Sigmoid colon (tissue), 7 donors: ENCODE measurements at regions of chr20 and their contacts with region 1.

Region 1: DNA sequence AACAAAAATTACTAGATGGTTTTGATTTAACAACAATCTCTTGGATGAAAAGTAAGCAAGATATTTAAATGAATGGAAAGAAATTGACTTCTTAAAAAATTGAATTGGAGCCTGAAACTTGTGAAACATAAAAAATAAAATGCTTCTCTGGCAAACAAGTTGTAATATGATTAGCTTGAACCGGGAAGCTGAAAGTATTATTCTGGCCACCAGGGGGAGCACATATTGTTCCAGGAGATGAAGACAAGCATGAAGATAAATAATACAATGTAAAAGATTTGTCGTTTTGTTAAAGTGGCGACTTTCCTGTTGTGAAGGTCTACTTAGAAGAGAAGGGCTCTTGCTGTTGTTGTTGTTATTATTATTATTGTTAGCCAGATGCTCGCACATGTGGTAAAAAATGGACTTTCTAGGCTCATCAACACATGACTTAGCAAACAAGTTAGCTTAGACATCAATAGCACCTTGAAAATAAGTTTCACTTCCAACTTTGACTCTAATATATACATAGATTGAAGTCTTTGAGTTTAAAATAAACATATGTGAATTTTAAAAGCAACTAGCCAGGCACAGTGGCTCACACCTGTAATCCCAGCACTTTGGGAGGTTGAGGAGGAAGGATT is 14.2 kb downstream of the PAX1 start:
- DNase-seq: peak; percentile 82
- H3K4me3 ChIP-seq: no peak overlapping the region
- H3K27ac ChIP-seq: no peak overlapping the region
- H3K4me1 ChIP-seq: peaks cover 0 to 2% (median 0%) of the 10 kb centered on the region in 4 donors
- H3K27me3 ChIP-seq: peaks cover 14 to 40% (median 30%) of the 10 kb centered on the region in 3 donors
- CTCF ChIP-seq: peak; percentile 41 to 79 (median 60)
- EP300 ChIP-seq: no peak
- POLR2A ChIP-seq: no peak

Region 2: DNA sequence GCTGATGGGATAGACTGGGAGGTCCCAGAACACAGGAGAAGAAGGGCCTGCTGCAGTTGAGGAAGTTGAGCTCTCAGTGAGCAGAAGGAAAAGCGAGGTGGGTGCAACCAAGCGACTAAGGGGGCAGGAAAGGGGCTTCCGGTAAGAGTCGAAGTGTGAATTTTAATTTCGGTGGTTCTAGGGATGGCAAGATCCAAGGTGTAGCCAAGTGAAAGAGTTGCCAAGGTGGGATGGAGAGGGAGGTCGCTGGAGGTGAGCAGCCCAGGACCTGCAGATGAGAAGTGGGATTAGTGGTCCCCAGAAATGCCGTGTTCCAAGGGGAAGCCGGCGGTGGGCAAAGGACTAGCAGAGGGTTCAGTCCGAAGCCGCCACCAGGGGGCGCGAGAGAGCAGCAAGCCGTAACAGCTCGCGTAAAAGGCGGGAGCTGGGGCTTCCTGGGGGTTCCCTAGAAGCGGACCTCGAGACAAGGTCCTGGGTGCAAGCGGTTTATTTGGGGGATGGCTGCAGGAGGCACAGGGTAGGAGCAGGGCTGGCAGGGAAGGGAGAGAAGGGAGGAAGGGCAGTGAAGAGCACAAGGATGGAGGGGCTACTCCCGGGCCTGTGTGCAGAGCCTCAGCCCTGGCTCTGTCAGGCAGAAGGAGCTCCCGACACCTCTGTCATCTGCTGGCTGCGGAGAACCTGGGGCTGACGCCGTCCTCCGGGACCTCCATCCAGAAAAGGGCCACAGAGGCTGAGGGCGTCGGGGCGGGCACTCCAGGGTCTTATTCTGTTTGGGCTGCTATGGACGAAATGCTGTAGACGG is 89.4 kb after region 1 on chr20:
- intact Hi-C with region 1: loop called (anchors 5 kb)
- DNase-seq: no peak
- H3K4me3 ChIP-seq: no peak overlapping the region
- H3K27ac ChIP-seq: no peak overlapping the region
- H3K4me1 ChIP-seq: peaks cover 0 to 20% (median 8%) of the 10 kb centered on the region in 4 donors
- H3K27me3 ChIP-seq: peaks cover 0 to 14% (median 0%) of the 10 kb centered on the region in 3 donors
- CTCF ChIP-seq: peak; percentile 32 to 71 (median 54)
- EP300 ChIP-seq: no peak
- POLR2A ChIP-seq: no peak

Region 3: GRCh38 chr20:22312744-22313346 is 593.1 kb after region 1 on chr20:
- intact Hi-C with region 1: loop called (anchors 5 kb)
- DNase-seq: no peak
- H3K4me3 ChIP-seq: no peak overlapping the region
- H3K27ac ChIP-seq: no peak overlapping the region
- H3K4me1 ChIP-seq: no peaks in the 10 kb centered on the region
- H3K27me3 ChIP-seq: peaks cover 0 to 5% (median 0%) of the 10 kb centered on the region in 3 donors
- CTCF ChIP-seq: peak in 3 of 4 experiments; percentile 14 to 66 (median 45)
- EP300 ChIP-seq: no peak
- POLR2A ChIP-seq: no peak